ENCODE measurements at regions of chr1 and their contacts with region 1.

Region 1: DNA sequence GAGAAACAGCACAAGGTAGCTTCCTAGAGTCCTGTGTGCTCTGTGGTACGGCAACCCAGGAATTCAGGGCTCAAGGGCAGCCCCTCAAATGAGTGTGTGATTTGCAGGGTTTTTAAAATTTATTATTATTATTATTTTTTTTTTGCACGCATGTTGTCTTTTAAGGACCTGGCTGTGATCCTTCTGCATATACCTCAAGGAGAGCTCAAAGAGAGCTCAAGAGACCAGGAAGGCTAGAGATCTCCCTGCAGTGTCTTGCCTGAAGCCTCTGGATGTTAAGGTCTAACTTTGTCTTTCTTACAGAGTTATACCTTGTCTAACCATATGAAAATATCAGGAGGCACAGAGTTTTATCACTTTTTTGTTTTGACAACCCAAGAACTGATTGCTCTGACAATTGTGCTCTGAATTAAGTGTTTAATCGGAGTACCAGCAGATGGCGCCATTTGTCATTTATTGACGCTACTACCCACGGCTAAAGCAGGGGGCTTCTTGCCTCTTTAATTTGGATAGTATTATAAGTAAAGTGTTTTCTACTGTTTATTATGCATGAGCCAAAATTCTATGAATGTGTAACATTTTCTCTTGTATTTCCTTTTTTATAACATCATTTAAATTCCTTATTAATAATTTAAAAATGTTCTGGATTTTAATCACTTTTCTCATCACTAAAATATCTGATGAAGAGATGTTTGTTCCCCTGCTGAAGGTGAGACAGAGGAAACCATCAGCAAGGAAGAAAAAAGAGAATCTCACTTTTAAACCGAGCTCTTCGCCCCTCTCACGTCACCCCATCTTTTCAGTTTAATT is 35.8 kb upstream of the LMO4 start:
- DNase-seq: peak; percentile 7 to 78
- H3K4me3 ChIP-seq: no peak overlapping the region
- H3K27ac ChIP-seq: no peak overlapping the region
- H3K4me1 ChIP-seq: peaks cover 0 to 5% (median 3%) of the 10 kb centered on the region in 4 experiments; a peak in 2 of 7 replicates
- H3K27me3 ChIP-seq: no peaks in the 10 kb centered on the region
- CTCF ChIP-seq: peak in 2 of 3 experiments; percentile 68 to 74; a peak in 3 of 4 replicates
- EP300 ChIP-seq: no peak
- POLR2A ChIP-seq: no peak
- RAD21 ChIP-seq: peak; percentile 88

Region 2: GRCh38 chr1:87279966-87280535 is 12.8 kb before region 1 on chr1:
- CTCF ChIA-PET with region 1: interaction called, 16 read pairs
- POLR2A ChIA-PET with region 1: no interaction called
- DNase-seq: no peak
- H3K4me3 ChIP-seq: no peak overlapping the region
- H3K27ac ChIP-seq: no peak overlapping the region
- H3K4me1 ChIP-seq: no peaks in the 10 kb centered on the region; a peak in 1 of 7 replicates
- H3K27me3 ChIP-seq: peaks cover 0 to 1% (median 0%) of the 10 kb centered on the region in 4 experiments; a peak in 1 of 7 replicates
- CTCF ChIP-seq: peak in 2 of 3 experiments; percentile 13 to 35; a peak in 2 of 4 replicates
- EP300 ChIP-seq: no peak
- POLR2A ChIP-seq: no peak
- RAD21 ChIP-seq: peak; percentile 52 to 60

Region 3: GRCh38 chr1:87305762-87306161 is 12.9 kb after region 1 on chr1:
- CTCF ChIA-PET with region 1: interaction called, 10 read pairs
- POLR2A ChIA-PET with region 1: no interaction called
- DNase-seq: no peak
- H3K4me3 ChIP-seq: no peak overlapping the region
- H3K27ac ChIP-seq: no peak overlapping the region
- H3K4me1 ChIP-seq: peaks cover 0 to 11% (median 0%) of the 10 kb centered on the region in 4 experiments; a peak in 4 of 7 replicates
- H3K27me3 ChIP-seq: no peaks in the 10 kb centered on the region
- CTCF ChIP-seq: no peak
- EP300 ChIP-seq: no peak
- POLR2A ChIP-seq: no peak
- RAD21 ChIP-seq: no peak